ENCODE measurements at regions of chr17 and their contacts with region 1.

Region 1: GRCh38 chr17:4074831-4075495 is 67.9 kb downstream of the ZZEF1 start:
- DNase-seq: no peak
- H3K4me3 ChIP-seq: no peak overlapping the region
- H3K27ac ChIP-seq: no peak overlapping the region
- H3K4me1 ChIP-seq: no peaks in the 10 kb centered on the region
- H3K27me3 ChIP-seq: no peaks in the 10 kb centered on the region
- CTCF ChIP-seq: peak; percentile 55

Region 2: DNA sequence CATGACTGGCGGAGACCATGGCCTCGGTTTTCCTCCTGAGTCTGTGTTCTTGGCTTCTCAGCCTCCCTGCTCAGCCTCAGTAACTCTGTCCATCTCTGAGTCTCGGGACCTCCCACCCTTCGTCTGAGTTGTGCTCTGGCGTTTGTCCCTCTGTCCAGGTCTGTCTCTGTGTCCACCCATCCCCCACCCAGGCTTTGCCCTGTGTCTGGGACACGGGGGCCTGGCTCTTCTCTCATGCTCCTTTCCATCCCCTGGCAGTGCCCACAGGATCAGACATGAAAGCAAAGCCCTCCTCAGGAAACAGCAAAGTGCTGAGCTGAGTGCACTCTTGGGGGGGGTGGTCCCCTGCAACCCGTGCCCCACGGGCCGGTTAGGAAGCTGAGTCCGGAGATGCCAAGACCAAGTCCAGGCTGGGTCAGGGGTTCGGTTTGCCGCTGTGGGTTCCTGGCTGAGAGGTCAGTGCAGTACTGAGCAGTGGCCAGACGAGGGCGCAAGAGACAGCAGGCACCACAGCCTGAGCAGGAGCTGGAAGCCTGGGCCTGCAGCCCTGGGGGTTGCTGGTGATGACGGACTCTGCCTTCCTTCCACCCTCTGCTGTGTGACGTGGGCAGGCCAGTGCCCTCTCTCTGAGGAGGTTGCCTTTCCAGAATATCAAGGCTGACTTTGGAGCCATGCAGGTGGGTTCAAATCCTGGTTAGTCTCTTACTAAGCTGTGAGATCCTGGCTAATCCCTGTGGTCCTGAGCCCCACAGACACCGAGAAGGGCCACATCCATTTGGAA is 161.2 kb before region 1 on chr17:
- intact Hi-C with region 1: loop called (anchors 10 kb)
- DNase-seq: peak; percentile 82
- H3K4me3 ChIP-seq: no peak overlapping the region
- H3K27ac ChIP-seq: peak overlapping the region; percentile 63
- H3K4me1 ChIP-seq: peaks cover 18% of the 10 kb centered on the region
- H3K27me3 ChIP-seq: no peaks in the 10 kb centered on the region
- CTCF ChIP-seq: peak; percentile 94